ENCODE measurements at regions of chr16 and their contacts with region 1.

Region 1: DNA sequence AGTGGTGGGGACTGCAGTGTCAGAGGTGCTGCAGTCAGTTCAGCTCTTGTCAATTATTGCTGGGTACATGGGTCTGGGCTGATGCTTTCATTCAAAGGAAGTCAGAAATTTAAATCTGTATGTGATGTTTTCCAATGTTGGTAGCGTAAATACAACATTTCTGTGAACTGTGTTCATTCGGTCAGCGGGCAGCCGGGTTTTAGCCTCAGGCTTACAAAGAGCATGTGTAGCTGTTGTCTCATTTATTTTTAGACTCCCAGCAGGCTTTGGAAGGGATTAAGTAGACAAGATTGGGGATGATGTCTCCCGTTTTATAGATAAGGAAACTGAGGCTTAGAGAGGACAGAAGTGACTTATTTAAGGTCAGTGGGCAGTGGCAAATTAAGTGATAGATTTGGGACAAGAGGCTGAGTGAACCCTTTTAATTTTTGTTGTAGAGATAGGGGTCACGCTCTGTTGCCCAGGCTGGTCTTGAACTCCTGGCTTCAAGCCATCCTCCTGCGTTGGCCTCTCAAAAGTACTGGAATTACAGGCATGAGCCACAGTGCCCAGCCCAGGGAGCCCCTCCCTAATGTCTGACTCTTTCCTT is 8.1 kb downstream of the AQP8 start:
- DNase-seq: no peak
- ATAC-seq: no peak
- H3K4me3 Mint-ChIP-seq: no peak overlapping the region
- H3K27ac Mint-ChIP-seq: no peak overlapping the region
- H3K4me1 Mint-ChIP-seq: no peaks in the 10 kb centered on the region
- H3K27me3 Mint-ChIP-seq: no peaks in the 10 kb centered on the region
- CTCF ChIP-seq: no peak

Region 2: GRCh38 chr16:24834459-24835335 is 390.1 kb before region 1 on chr16:
- CTCF ChIA-PET with region 1: interaction called, 5 read pairs
- POLR2A ChIA-PET with region 1: interaction called, 3 read pairs
- intact Hi-C with region 1: loop called (anchors 5 kb)
- DNase-seq: no peak
- ATAC-seq: no peak
- H3K4me3 Mint-ChIP-seq: no peak overlapping the region
- H3K27ac Mint-ChIP-seq: no peak overlapping the region
- H3K4me1 Mint-ChIP-seq: no peaks in the 10 kb centered on the region
- H3K27me3 Mint-ChIP-seq: peaks cover 2% of the 10 kb centered on the region
- CTCF ChIP-seq: no peak

Region 3: GRCh38 chr16:24906199-24907020 is 318.4 kb before region 1 on chr16:
- CTCF ChIA-PET with region 1: interaction called, 18 read pairs
- POLR2A ChIA-PET with region 1: interaction called, 7 read pairs
- intact Hi-C with region 1: no loop called
- DNase-seq: no peak
- ATAC-seq: no peak
- H3K4me3 Mint-ChIP-seq: no peak overlapping the region
- H3K27ac Mint-ChIP-seq: no peak overlapping the region
- H3K4me1 Mint-ChIP-seq: peaks cover 3% of the 10 kb centered on the region
- H3K27me3 Mint-ChIP-seq: no peaks in the 10 kb centered on the region
- CTCF ChIP-seq: no peak

Region 4: GRCh38 chr16:25260416-25260815 is 35.6 kb after region 1 on chr16:
- CTCF ChIA-PET with region 1: no interaction called
- POLR2A ChIA-PET with region 1: no interaction called
- intact Hi-C with region 1: no loop called
- DNase-seq: no peak
- ATAC-seq: no peak
- H3K4me3 Mint-ChIP-seq: no peak overlapping the region
- H3K27ac Mint-ChIP-seq: no peak overlapping the region
- H3K4me1 Mint-ChIP-seq: peaks cover 50% of the 10 kb centered on the region
- H3K27me3 Mint-ChIP-seq: no peaks in the 10 kb centered on the region
- CTCF ChIP-seq: no peak

Region 5: GRCh38 chr16:25270577-25270976 is 45.8 kb after region 1 on chr16:
- CTCF ChIA-PET with region 1: no interaction called
- POLR2A ChIA-PET with region 1: no interaction called
- intact Hi-C with region 1: no loop called
- DNase-seq: no peak
- ATAC-seq: no peak
- H3K4me3 Mint-ChIP-seq: no peak overlapping the region
- H3K27ac Mint-ChIP-seq: no peak overlapping the region
- H3K4me1 Mint-ChIP-seq: peaks cover 6% of the 10 kb centered on the region
- H3K27me3 Mint-ChIP-seq: no peaks in the 10 kb centered on the region
- CTCF ChIP-seq: no peak

Measured in activated B cell treated with CpG ODN at 0.5 μM for 24 hours (primary cell).